Activated T-helper 2 cell treated with anti-CD3 and anti-CD28 coated beads, Interferon-gamma antibody, Interleukin-2, Interleukin-4, amounts not matched to agents 10 μg/mL and 5 μg/mL and 100 μg/mL, durations not matched to agents 14 hours and 24 hours and 36 hours (primary cell): ENCODE measurements at regions of chr2 and their contacts with region 1.

Region 1: DNA sequence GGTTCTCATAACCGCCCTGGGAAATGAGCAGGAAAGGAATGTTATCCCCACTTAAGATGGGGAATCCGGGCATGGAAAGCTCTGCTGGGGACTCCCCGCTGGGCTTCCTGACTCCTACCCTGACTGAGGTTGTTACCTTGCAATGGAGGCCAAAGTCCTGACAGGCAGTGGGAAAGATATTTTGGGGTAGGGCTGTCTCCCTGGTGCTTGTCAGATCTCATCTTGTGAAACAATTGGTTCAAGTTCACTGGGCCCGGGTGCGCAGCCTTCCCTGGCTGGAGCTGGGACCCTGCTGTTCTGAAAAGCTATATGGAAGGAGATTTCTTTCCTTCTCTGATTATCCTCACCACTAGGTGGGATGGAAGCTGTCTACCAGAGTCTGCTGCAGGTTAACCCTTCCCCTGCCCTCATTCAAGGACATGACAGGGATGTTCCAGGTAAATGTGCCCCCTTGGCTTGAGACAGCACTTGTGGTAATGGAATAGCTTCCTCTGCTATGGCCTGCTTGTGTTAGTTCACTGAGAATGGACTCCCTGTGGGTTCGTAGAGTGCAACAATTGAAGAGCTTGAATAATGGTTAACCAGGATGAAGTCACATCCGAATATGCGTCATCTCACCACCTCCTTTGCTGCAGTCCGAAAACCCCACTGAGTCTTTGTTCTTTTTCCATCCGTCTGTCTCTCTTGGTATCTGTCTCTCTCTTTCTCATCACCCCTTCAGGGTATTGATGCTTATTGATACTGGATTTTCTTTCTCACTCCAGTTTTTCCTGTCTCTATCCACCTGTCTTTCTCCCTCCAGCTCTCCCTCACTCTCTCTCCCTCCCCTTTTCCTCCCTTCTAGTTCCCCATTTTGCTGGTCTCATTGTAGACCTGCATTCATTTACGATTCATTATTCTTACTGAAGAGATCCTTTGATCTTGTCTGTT is 67.8 kb upstream of the EPAS1 start:
- DNase-seq: peak; percentile 31
- H3K4me3 Mint-ChIP-seq: peak overlapping the region; percentile 11
- H3K27ac Mint-ChIP-seq: peak overlapping the region; percentile 80
- H3K4me1 Mint-ChIP-seq: peaks cover 55% of the 10 kb centered on the region
- H3K27me3 Mint-ChIP-seq: peaks cover 23% of the 10 kb centered on the region

Region 2: DNA sequence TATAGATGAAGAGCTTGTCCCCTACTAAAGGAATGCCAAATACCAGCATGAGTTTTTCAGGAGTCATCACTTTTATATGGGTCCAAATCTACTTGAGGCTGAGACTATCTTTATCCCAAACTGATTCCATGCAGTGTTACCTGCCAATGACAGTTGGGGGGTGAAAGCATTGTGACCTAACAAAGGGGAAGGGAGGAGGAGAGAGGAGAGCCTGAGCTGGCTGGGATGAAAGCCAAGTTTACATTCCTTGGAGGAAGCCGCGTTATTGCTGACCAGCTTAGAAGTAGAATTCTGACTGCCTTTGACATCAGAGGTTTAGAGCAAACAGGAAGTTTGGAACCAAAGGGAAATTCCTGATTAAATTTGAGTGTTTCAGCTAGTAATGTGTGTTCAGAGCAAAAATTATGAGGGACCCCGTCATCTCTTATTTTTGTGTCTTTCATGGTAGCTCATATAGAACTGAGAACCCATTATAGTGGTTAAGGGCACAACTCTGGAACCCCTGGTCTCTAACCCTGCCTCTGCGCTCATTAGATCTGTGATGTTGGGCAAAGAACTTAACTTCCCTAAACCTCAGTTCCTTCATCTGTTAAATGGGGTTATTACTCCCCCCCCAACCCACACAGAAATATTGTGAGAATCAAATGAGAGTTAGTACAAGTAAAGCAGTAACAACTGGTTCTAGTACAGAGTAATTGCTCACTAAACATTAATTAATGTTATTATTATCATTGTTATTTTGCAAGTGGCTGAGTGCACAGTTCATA is 131.5 kb before region 1 on chr2:
- intact Hi-C with region 1: loop called (anchors 5 kb)
- DNase-seq: no peak
- H3K4me3 Mint-ChIP-seq: no peak overlapping the region
- H3K27ac Mint-ChIP-seq: no peak overlapping the region
- H3K4me1 Mint-ChIP-seq: peaks cover 33% of the 10 kb centered on the region
- H3K27me3 Mint-ChIP-seq: no peaks in the 10 kb centered on the region

Region 3: GRCh38 chr2:46187112-46187618 is 42.2 kb before region 1 on chr2:
- intact Hi-C with region 1: loop called (anchors 5 kb)
- DNase-seq: peak; percentile 26
- H3K4me3 Mint-ChIP-seq: peak overlapping the region; percentile 50
- H3K27ac Mint-ChIP-seq: peak overlapping the region; percentile 87
- H3K4me1 Mint-ChIP-seq: peaks cover 17% of the 10 kb centered on the region
- H3K27me3 Mint-ChIP-seq: no peaks in the 10 kb centered on the region

Region 4: DNA sequence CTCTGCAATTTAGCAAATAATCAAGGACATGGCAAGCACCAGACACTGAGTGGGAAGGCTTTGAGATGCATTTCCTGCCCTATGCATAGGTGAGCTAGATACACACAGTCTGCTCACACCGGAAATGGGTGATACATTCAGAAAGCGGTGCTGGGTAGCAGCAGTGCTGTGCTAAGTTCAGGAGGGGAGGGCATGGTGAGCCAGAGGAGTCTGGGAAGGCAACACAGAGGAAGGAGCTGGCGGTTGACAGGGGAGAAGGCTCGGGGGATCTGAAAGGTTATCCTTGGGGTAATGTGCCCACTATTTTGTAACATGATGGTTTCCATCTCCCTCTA is 10.4 kb after region 1 on chr2:
- intact Hi-C with region 1: loop called (anchors 1 kb)
- DNase-seq: peak; percentile 63
- H3K4me3 Mint-ChIP-seq: peak overlapping the region; percentile 62
- H3K27ac Mint-ChIP-seq: peak overlapping the region; percentile 88
- H3K4me1 Mint-ChIP-seq: peaks cover 51% of the 10 kb centered on the region
- H3K27me3 Mint-ChIP-seq: no peaks in the 10 kb centered on the region

Region 5: DNA sequence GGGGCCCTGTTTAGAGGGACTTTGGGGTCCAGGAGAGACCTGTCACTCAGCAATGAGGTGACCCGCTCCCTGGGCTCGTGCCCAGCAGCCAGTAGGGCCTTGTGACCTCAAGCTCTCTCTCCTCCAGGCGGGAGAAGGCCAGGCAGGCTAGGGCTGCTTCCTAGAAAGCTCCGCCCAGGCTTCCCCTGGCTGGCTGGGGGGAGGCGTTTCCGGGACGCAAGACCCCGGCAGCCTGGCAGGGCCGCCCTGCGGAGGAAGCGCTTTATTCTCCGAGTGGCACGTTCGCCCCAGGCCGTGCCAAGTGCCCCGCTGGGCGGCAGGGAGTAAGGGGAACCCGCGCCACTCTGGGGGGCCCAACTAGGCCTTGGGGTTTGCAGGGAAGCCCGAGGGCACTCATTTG is 46.6 kb after region 1 on chr2:
- intact Hi-C with region 1: loop called (anchors 2 kb)
- DNase-seq: no peak
- H3K4me3 Mint-ChIP-seq: no peak overlapping the region
- H3K27ac Mint-ChIP-seq: no peak overlapping the region
- H3K4me1 Mint-ChIP-seq: peaks cover 5% of the 10 kb centered on the region
- H3K27me3 Mint-ChIP-seq: peaks cover 27% of the 10 kb centered on the region

Region 6: GRCh38 chr2:46434851-46435273 is 205.5 kb after region 1 on chr2:
- intact Hi-C with region 1: loop called (anchors 5 kb)
- DNase-seq: no peak
- H3K4me3 Mint-ChIP-seq: peak overlapping the region; percentile 37
- H3K27ac Mint-ChIP-seq: peak overlapping the region; percentile 86
- H3K4me1 Mint-ChIP-seq: peaks cover 94% of the 10 kb centered on the region
- H3K27me3 Mint-ChIP-seq: no peaks in the 10 kb centered on the region

Region 7: DNA sequence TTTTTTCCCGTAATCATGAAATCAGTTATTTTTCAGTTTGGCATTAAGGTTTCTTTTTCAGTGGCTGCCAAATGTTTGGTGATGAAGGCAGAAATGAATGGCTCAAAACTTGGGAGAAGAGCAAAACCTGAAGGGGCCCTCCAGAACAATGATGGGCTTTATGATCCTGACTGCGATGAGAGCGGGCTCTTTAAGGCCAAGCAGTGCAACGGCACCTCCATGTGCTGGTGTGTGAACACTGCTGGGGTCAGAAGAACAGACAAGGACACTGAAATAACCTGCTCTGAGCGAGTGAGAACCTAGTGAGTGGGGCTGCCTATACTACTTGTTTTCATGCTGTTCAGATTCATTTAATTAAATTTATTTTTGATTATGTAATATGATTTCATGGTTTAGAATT is 1144.3 kb after region 1 on chr2:
- intact Hi-C with region 1: no loop called
- DNase-seq: no peak
- H3K4me3 Mint-ChIP-seq: no peak overlapping the region
- H3K27ac Mint-ChIP-seq: no peak overlapping the region
- H3K4me1 Mint-ChIP-seq: no peaks in the 10 kb centered on the region
- H3K27me3 Mint-ChIP-seq: peaks cover 21% of the 10 kb centered on the region